Endothelial cell of umbilical vein (primary cell): ENCODE measurements at regions of chr9 and their contacts with region 1.

Region 1: DNA sequence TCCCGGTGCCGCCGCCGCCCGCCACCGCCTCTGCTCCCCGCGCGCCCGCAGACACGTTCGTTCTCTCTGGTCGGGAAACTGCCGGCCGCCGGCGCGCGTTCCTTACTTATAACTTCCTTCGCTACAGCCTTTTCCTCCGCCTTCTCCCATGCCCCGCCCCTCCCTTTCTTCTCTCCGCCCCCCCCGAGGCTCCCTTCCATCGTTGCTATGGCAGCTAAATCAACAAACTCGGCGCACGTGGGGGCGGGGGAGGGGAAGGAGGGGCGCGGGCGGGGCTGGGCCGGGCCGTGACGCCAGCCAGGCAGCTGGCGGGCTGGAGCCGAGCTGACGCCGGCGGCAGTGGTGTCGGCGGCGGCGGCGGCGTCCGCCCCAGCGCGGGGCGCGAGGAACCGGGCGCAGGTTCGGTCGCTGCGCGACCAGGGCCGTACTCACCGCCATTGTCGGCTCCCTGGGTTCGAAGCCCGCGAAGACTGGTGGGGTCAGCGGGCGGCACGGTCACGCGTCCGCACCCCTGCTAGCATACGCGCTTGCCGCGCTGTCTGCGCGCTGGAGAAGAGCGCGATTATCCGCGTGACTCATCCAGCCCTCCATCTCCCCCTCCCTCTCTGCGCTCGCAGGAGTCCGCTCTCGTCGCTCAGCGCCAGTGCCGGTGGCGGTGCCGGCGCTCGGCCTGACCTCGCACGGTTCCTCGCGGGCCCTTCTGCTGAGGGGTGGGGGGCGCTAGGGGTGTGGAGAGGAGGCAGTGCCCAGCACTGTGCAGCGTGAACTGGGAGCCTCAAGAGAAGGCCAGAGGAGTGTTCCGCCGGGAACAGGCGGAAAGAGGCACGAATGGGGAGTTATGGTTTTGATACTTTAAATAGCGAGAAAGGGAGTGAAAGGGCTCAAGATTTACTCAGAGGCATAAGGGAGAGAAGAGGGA is at the start of gene KLF4:
- DNase-seq: peak; percentile 94
- H3K4me3 ChIP-seq: peak within 1 kb of the TSS; percentile 47 to 68 (median 63)
- H3K27ac ChIP-seq: peak within 1 kb of the TSS; percentile 66
- H3K4me1 ChIP-seq: peaks cover 19% of the 10 kb centered on the region
- H3K27me3 ChIP-seq: peaks cover 8 to 22% of the 10 kb centered on the region in 2 experiments
- CTCF ChIP-seq: no peak
- POLR2A ChIP-seq: peak; percentile 33
- total RNA-seq, gene KLF4: 1.5 and 3.8 TPM in 2 replicates

Region 2: GRCh38 chr9:107425101-107426045 is 64.6 kb before region 1 on chr9:
- CTCF ChIA-PET with region 1: interaction called, 6 read pairs
- POLR2A ChIA-PET with region 1: no interaction called
- dilution Hi-C with region 1: no loop called
- intact Hi-C with region 1: loop called (anchors 1 kb)
- DNase-seq: peak; percentile 65
- H3K4me3 ChIP-seq: peak overlapping the region in 1 of 3 experiments; percentile 12
- H3K27ac ChIP-seq: no peak overlapping the region
- H3K4me1 ChIP-seq: peaks cover 4% of the 10 kb centered on the region
- H3K27me3 ChIP-seq: no peaks in the 10 kb centered on the region
- CTCF ChIP-seq: peak; percentile 98 to 99
- POLR2A ChIP-seq: no peak

Region 3: DNA sequence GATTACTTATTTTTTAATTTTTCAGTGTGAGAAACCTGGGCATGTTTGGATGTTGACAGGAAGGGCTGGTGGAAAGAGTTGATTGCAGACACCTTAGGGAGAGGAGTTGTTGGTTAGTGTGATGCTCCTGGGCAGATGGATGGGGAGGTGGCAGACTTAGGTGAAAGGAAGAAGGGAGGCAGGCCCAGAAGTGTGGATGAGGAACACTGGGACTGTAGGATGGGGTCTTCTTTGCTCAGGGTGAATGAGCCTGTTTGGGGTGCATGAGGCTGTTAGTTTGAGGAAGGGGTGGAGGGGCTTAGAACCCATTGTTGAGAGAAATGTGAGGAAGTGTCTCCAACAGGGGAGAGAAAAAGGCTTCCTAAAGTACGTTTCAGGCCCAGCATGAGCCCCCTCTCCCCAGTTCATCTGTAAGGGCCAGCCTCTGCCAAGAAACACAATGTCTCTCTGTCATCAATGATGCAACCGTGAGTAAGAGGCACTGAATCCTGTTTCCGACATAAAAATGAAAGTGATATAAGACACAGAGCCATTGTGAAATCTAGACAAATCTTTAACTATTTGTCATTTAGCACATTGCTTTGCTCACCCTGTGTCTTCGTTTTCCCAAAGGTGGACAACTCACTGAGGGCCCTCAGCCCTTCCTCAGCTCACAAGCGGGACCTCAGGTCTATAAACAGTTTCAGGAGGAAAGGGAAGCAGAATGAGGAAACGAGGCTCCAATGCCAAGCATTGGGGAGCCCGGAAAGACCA is 58.3 kb after region 1 on chr9:
- CTCF ChIA-PET with region 1: interaction called, 5 read pairs
- POLR2A ChIA-PET with region 1: no interaction called
- dilution Hi-C with region 1: no loop called
- intact Hi-C with region 1: loop called (anchors 1 kb)
- DNase-seq: peak; percentile 80
- H3K4me3 ChIP-seq: peak overlapping the region in 2 of 3 experiments; percentile 10 to 24
- H3K27ac ChIP-seq: peak overlapping the region; percentile 74
- H3K4me1 ChIP-seq: peaks cover 16% of the 10 kb centered on the region
- H3K27me3 ChIP-seq: no peaks in the 10 kb centered on the region
- CTCF ChIP-seq: no peak
- POLR2A ChIP-seq: no peak

Region 4: GRCh38 chr9:107711540-107711939 is 221.6 kb after region 1 on chr9:
- CTCF ChIA-PET with region 1: interaction called, 3 read pairs
- POLR2A ChIA-PET with region 1: no interaction called
- dilution Hi-C with region 1: no loop called
- intact Hi-C with region 1: loop called (anchors 1 kb)
- DNase-seq: peak; percentile 80
- H3K4me3 ChIP-seq: no peak overlapping the region
- H3K27ac ChIP-seq: no peak overlapping the region
- H3K4me1 ChIP-seq: peaks cover 16% of the 10 kb centered on the region
- H3K27me3 ChIP-seq: peaks cover 14 to 26% of the 10 kb centered on the region in 2 experiments
- CTCF ChIP-seq: no peak
- POLR2A ChIP-seq: no peak

Region 5: GRCh38 chr9:107914151-107914550 is 424.2 kb after region 1 on chr9:
- CTCF ChIA-PET with region 1: no interaction called
- POLR2A ChIA-PET with region 1: no interaction called
- dilution Hi-C with region 1: no loop called
- intact Hi-C with region 1: no loop called
- DNase-seq: no peak
- H3K4me3 ChIP-seq: no peak overlapping the region
- H3K27ac ChIP-seq: no peak overlapping the region
- H3K4me1 ChIP-seq: no peaks in the 10 kb centered on the region
- H3K27me3 ChIP-seq: no peaks in the 10 kb centered on the region
- CTCF ChIP-seq: no peak
- POLR2A ChIP-seq: no peak

Region 6: DNA sequence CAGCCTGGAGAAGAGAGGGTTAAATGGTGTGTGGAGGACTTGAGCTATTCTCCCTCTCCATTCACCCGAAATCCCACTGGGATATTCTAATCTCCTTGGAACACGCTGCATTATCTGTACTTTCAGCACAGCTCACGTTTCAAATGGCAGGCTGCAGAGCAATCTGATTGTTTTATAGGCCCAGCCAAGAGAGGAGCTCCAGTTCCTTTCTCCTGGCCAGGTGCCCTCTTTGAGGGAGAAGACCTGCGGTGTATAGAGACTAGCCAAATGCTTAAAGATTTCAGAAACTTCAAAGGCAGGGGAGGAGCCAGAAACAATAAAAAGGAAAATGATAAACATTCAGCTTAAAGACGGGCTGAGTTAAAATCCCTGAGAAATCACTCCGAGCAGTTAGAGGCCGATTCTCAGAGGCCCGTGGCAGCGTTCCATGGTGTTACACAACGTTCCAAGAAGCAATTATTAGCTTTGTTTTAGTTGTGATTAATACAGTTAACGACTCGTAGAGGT is 563.7 kb after region 1 on chr9:
- CTCF ChIA-PET with region 1: interaction called, 7 read pairs
- POLR2A ChIA-PET with region 1: interaction called, 4 read pairs
- dilution Hi-C with region 1: no loop called
- intact Hi-C with region 1: loop called (anchors 2 kb)
- DNase-seq: peak; percentile 75
- H3K4me3 ChIP-seq: no peak overlapping the region
- H3K27ac ChIP-seq: peak overlapping the region; percentile 23
- H3K4me1 ChIP-seq: peaks cover 55% of the 10 kb centered on the region
- H3K27me3 ChIP-seq: no peaks in the 10 kb centered on the region
- CTCF ChIP-seq: no peak
- POLR2A ChIP-seq: no peak

Region 7: GRCh38 chr9:109119439-109120203 is 1629.7 kb after region 1 on chr9 and contains the start of gene TMEM245:
- CTCF ChIA-PET with region 1: no interaction called
- POLR2A ChIA-PET with region 1: no interaction called
- dilution Hi-C with region 1: no loop called
- intact Hi-C with region 1: loop called (anchors 10 kb)
- DNase-seq: peak; percentile 98
- H3K4me3 ChIP-seq: peak within 1 kb of the TSS; percentile 61 to 75 (median 74)
- H3K27ac ChIP-seq: peak within 1 kb of the TSS; percentile 42
- H3K4me1 ChIP-seq: peaks cover 16% of the 10 kb centered on the region
- H3K27me3 ChIP-seq: no peaks in the 10 kb centered on the region
- CTCF ChIP-seq: no peak
- POLR2A ChIP-seq: peak; percentile 75
- total RNA-seq, gene TMEM245: 39.4 and 44.2 TPM in 2 replicates